Prostate gland (tissue), 2 donors: ENCODE measurements at regions of chr9 and their contacts with region 1.

Region 1: GRCh38 chr9:73038613-73039012 is 85.8 kb upstream of the ALDH1A1 start:
- DNase-seq: no peak
- H3K4me3 ChIP-seq: no peak overlapping the region
- H3K27ac ChIP-seq: peak overlapping the region; percentile 54 to 67
- H3K4me1 ChIP-seq: no peaks in the 10 kb centered on the region
- H3K27me3 ChIP-seq: no peaks in the 10 kb centered on the region
- CTCF ChIP-seq: no peak
- POLR2A ChIP-seq: no peak

Region 2: GRCh38 chr9:72983512-72984225 is 54.9 kb before region 1 on chr9:
- intact Hi-C with region 1: loop called (anchors 2 kb)
- DNase-seq: no peak
- H3K4me3 ChIP-seq: no peak overlapping the region
- H3K27ac ChIP-seq: peak overlapping the region in 1 of 2 donors; percentile 13
- H3K4me1 ChIP-seq: no peaks in the 10 kb centered on the region
- H3K27me3 ChIP-seq: no peaks in the 10 kb centered on the region
- CTCF ChIP-seq: no peak
- POLR2A ChIP-seq: no peak